ENCODE measurements at regions of chr2 and their contacts with region 1.

Region 1: DNA sequence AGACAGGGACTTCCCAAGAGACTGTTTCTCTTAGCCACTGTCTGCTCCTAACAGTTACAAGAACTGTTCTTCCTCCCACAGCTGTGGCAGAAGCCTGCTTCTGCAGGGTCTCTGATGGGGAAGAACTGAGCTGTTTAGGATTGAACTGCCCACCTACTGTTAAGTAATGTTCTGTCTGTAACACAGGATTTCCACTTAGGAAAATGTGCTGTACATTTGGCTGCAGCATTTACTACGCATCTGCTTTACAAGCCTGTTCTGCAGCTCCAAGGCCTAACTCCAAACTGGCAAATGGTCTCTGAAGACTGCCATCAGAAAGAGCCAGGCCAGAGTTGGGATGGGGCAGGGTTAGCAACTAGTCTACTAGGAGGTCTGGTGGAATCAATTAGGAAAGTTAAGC is 87.8 kb upstream of the UPP2 start:
- DNase-seq: no peak
- ATAC-seq: no peak
- H3K4me3 Mint-ChIP-seq: no peak overlapping the region
- H3K27ac Mint-ChIP-seq: no peak overlapping the region
- H3K4me1 Mint-ChIP-seq: peaks cover 15% of the 10 kb centered on the region
- H3K27me3 Mint-ChIP-seq: peaks cover 3% of the 10 kb centered on the region

Region 2: GRCh38 chr2:158024288-158024898 is 10.5 kb after region 1 on chr2:
- CTCF ChIA-PET with region 1: interaction called, 29 read pairs
- POLR2A ChIA-PET with region 1: no interaction called
- DNase-seq: peak; percentile 63
- ATAC-seq: peak; percentile 64
- H3K4me3 Mint-ChIP-seq: no peak overlapping the region
- H3K27ac Mint-ChIP-seq: no peak overlapping the region
- H3K4me1 Mint-ChIP-seq: peaks cover 4% of the 10 kb centered on the region
- H3K27me3 Mint-ChIP-seq: peaks cover 3% of the 10 kb centered on the region